Brain microvascular endothelial cell (primary cell): ENCODE measurements at regions of chr2 and their contacts with region 1.

Region 1: DNA sequence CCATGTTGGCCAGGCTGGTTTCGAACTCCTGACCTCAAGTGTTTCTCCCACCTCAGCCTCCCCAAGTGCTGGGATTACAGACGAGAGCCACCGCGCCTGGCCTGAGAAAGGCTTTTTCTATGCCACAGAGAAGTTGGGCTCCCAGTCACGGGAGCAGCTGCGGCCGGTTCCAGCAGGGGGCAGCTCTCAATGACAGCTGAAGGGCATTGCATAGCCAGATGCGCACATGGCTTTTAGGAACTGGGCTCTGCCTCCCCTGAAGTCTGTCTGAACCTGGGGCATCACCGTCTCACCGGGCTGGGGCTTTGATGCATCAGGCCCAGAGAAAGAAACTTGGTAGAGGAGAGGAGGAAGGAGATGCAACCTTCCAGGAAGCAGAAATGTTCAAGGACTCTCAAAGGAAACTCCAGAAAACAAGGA is 84.2 kb upstream of the LAPTM4A start:
- DNase-seq: peak; percentile 43
- H3K4me3 ChIP-seq: no peak overlapping the region
- H3K27ac ChIP-seq: no peak overlapping the region
- H3K27me3 ChIP-seq: no peaks in the 10 kb centered on the region
- CTCF ChIP-seq: peak; percentile 94

Region 2: DNA sequence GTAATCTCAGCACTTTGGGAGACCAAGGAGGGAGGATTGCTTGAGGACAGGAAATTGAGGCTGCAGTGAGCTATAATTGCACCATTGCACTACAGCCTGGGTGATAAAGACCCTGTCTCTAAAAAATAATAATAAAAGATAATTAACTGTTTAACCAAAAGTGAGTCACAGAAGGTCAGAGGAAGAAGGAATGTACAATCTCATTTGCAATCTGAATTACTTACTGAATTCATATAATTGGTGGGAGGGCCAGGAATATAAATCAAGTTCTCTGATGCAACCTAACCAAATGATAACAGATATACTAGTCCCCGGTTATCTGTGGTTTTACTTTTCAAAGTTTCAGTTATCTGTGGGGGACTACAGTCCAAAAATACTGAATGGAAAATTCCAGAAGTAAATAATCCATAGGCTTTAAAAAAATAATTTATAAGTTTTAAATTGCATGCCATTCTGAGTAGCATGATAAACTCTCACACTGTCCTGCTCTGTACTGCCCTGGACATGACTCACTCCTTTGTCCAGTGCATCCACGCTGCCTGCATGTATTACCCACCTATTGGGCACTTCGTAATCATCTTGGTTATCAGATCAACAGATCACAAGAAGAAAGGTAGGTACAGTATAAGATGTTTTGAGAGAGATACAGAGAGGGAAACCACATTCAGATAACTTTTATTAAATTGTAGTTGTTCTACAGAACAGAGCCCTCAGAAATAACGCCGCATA is 110.4 kb before region 1 on chr2:
- in situ Hi-C with region 1: no loop called
- DNase-seq: no peak
- H3K4me3 ChIP-seq: no peak overlapping the region
- H3K27ac ChIP-seq: no peak overlapping the region
- H3K27me3 ChIP-seq: no peaks in the 10 kb centered on the region
- CTCF ChIP-seq: no peak

Region 3: DNA sequence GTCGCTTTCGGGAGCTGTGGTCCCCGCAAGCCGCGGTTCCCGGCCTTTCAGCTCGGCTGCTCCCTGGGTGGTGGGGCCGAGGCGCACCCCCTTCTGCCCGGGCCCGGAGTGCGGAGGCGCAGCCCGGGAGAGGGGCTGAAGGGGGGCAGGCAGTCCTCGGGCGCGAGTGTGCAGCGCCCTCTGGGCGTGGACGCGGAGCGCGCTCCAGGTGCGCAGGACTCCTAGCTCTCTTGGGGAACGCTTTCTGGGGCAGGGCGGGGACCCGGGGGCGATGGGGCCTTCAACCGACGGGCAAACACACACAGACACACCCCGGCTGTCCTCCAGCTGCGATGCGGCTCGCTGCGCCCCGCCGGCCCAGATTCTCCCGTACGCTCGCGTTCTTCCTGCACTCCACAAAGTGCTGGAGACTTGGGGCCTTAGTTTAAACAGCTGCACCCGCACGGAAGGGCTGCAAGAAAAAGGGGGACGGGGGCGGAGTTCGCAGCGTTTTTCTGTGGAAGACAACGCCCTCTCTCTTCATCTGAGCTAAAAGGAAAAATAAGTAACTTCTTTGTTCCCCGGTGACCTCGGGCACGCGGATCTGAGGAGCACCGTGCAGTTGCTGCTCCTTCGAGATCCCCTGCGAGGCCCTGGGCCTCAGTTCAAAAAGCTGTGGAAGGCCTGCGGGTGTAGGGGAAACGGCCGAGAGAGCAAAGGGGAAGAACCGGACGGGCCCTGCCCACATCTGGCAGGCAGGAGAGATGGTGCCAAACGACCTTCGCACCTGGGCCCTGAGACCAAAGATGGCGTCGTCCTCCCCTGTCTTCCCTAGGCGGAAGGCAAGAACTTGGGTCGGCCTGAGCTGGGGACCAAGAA is 89.9 kb after region 1 on chr2:
- in situ Hi-C with region 1: loop called (anchors 10 kb)
- DNase-seq: no peak
- H3K4me3 ChIP-seq: peak overlapping the region; percentile 68
- H3K27ac ChIP-seq: no peak overlapping the region
- H3K27me3 ChIP-seq: no peaks in the 10 kb centered on the region
- CTCF ChIP-seq: peak; percentile 67